ENCODE measurements at regions of chr4 and their contacts with region 1.

Region 1: DNA sequence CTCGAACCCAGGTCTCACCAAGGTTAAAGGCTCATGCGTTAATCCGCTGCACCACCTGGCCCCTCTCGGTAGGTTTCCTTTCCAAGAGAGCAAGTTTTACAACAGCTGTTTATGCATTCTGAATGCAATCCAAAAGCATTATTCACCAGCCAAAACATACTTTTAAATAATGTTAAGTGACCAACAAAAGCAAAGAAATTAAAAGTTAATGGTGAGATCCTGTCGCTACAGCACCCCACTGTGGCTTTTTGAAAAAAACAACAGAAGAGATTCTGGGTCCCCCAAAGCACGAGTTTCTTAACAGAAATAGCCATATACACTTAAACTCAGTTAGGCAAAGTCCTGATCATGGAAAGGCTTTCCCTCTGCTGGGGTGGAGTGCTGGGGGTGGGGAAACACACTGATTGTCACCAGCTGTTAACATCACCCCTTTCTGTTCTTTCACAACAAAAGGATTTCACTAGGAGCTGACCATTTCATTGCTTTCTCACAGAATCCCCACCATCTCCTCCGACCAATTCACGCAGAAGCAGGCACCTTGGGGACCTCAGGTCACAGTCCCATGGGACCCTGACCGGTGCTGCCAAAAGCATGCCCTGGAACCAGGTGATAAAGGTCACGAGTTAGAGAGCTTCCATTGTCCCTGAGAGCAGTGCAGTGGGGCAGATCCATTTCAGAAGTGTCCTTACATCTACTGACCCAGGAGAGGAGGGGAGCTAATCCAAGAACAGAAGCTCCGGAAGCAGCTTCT is 51.2 kb downstream of the ZNF827 start:
- DNase-seq: no peak
- ATAC-seq: no peak
- H3K4me3 ChIP-seq: no peak overlapping the region
- H3K4me3 Mint-ChIP-seq: no peak overlapping the region
- H3K27ac ChIP-seq: no peak overlapping the region
- H3K27ac Mint-ChIP-seq: no peak overlapping the region
- H3K4me1 ChIP-seq: no peaks in the 10 kb centered on the region
- H3K4me1 Mint-ChIP-seq: peaks cover under 1 to 12% (median 9%) of the 10 kb centered on the region in 7 donors
- H3K27me3 ChIP-seq: no peaks in the 10 kb centered on the region
- H3K27me3 Mint-ChIP-seq: no peaks in the 10 kb centered on the region

Region 2: DNA sequence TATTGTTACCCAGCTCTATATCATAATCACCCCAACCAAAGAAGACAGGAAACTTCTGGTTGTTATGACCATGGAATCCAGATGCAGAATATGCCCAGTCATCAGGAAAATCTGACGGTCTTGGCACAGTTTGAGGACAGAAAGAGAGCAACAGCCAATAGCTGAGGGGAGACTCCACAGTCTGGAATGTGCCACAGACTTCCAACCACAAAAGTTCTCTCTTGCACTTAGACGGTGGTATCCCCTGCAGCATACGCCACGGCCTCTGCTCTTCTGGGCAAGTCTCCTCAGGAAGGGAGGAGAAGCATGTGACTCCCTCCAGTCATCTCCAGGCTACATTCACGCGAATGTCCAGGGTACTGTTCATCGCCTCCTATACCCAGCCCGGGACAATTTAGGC is 32.8 kb after region 1 on chr4:
- CTCF ChIA-PET with region 1: no interaction called
- POLR2A ChIA-PET with region 1: no interaction called
- intact Hi-C with region 1: loop called in 1 of 2 experiments (anchors 1 kb)
- DNase-seq: no peak
- ATAC-seq: no peak
- H3K4me3 ChIP-seq: no peak overlapping the region
- H3K4me3 Mint-ChIP-seq: no peak overlapping the region
- H3K27ac ChIP-seq: no peak overlapping the region
- H3K27ac Mint-ChIP-seq: no peak overlapping the region
- H3K4me1 ChIP-seq: no peaks in the 10 kb centered on the region
- H3K4me1 Mint-ChIP-seq: peaks cover 11 to 35% (median 28%) of the 10 kb centered on the region in 7 donors
- H3K27me3 ChIP-seq: no peaks in the 10 kb centered on the region
- H3K27me3 Mint-ChIP-seq: no peaks in the 10 kb centered on the region